T-cell (primary cell): ENCODE measurements at regions of chr11 and their contacts with region 1.

Region 1: GRCh38 chr11:102390667-102391465 is 43.9 kb downstream of the BIRC2 start:
- DNase-seq: peak in 30 of 35 experiments; percentile 17 to 74 (median 32)
- ATAC-seq: peak; percentile 62 to 72 (median 65)
- H3K4me3 ChIP-seq: no peak overlapping the region
- H3K4me3 Mint-ChIP-seq: no peak overlapping the region
- H3K27ac ChIP-seq: no peak overlapping the region
- H3K27ac Mint-ChIP-seq: peak overlapping the region; percentile 73 to 81
- H3K4me1 ChIP-seq: peaks cover 7 to 20% of the 10 kb centered on the region in 2 experiments
- H3K4me1 Mint-ChIP-seq: peaks cover 36 to 50% (median 46%) of the 10 kb centered on the region in 3 donors
- H3K27me3 ChIP-seq: no peaks in the 10 kb centered on the region
- H3K27me3 Mint-ChIP-seq: no peaks in the 10 kb centered on the region

Region 2: DNA sequence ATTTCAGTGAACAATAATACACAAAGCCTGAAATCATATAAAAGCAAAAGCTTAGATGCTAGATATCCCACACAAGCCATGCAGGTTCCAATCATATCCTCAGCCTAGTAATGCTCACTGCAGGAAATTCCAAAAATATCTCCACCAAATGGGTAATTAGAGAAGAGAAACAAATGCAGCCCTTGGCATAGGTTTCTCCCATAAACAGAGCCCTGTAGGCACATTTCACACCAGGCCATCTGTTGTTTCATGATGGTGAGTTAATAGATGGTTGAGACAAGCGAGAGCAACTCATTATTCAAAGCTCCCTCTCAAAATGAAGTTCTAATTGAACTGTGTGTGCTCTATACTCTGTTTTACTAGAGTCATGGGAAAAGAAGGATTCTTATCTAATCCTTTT is 652.4 kb before region 1 on chr11:
- CTCF ChIA-PET with region 1: no interaction called
- POLR2A ChIA-PET with region 1: no interaction called
- DNase-seq: no peak
- ATAC-seq: no peak
- H3K4me3 ChIP-seq: no peak overlapping the region
- H3K4me3 Mint-ChIP-seq: no peak overlapping the region
- H3K27ac ChIP-seq: no peak overlapping the region
- H3K27ac Mint-ChIP-seq: no peak overlapping the region
- H3K4me1 ChIP-seq: no peaks in the 10 kb centered on the region
- H3K4me1 Mint-ChIP-seq: no peaks in the 10 kb centered on the region
- H3K27me3 ChIP-seq: no peaks in the 10 kb centered on the region
- H3K27me3 Mint-ChIP-seq: no peaks in the 10 kb centered on the region

Region 3: DNA sequence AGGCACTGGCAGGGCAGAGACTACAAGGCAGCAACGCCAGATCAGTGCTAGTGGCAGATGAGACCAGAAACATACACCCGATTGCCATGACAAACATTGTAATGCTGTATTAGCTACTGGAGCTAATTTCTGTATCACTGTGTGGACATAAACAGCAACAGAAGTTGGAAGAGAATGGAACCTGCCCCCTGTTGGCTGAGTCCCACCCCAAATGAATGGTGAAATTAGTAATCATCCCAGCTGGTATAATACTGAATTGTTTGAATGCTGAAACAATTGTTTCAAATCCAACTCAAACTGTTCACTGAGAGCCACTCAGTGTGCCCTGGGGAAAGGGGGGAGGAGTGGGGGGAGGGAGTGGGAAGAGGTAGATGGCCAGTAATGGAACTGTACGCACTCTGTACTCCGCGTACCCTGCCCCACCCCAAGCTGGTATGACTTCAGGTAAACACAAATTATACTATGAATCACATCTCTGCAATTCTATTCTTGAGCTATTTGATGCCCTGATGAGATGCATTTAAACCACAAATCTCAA is 84.7 kb before region 1 on chr11:
- CTCF ChIA-PET with region 1: no interaction called
- POLR2A ChIA-PET with region 1: no interaction called
- DNase-seq: peak in 3 of 35 experiments; percentile 22 to 64 (median 49)
- ATAC-seq: peak; percentile 44 to 66 (median 60)
- H3K4me3 ChIP-seq: no peak overlapping the region
- H3K4me3 Mint-ChIP-seq: peak overlapping the region; percentile 37 to 60 (median 49)
- H3K27ac ChIP-seq: peak overlapping the region; percentile 90
- H3K27ac Mint-ChIP-seq: peak overlapping the region; percentile 95 to 97
- H3K4me1 ChIP-seq: peaks cover 30 to 41% of the 10 kb centered on the region in 2 experiments
- H3K4me1 Mint-ChIP-seq: peaks cover 61 to 78% (median 66%) of the 10 kb centered on the region in 3 donors
- H3K27me3 ChIP-seq: no peaks in the 10 kb centered on the region
- H3K27me3 Mint-ChIP-seq: no peaks in the 10 kb centered on the region

Region 4: DNA sequence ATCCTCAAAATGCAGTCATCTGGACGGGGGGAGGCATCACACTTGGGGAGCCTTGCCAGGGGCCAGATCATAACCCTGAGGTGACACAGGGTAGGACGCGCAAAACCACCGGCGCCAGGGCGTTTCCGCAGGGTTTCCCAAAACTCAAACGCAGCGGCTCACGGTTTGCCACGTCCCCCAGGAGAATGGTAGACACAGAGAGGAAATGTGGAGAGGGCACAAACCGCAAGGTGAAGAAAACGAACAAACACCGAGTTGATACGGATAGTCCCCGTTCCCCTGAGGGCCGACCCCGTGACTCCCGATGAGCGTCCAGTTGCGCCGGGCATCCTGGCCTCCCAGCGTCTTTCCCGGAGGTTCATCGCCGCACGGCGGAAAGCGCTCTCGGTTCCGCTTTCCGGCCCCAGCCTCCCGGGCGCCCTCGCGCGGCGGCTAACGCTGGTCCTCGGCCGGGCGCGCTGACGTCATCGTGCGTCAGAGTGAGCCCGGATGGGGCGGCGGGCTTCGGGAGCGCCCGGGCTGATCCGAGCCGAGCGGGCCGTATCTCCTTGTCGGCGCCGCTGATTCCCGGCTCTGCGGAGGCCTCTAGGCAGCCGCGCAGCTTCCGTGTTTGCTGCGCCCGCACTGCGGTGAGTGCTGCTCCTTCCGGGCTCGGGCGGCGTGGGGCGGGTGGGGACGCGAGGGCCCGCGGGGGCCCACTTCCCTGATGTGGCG is 44.0 kb before region 1 on chr11 and contains the start of gene BIRC2:
- CTCF ChIA-PET with region 1: interaction called, 5 to 12 read pairs
- POLR2A ChIA-PET with region 1: no interaction called
- DNase-seq: peak; percentile 88 to 98 (median 94)
- ATAC-seq: peak; percentile 85 to 92 (median 90)
- H3K4me3 ChIP-seq: peak within 1 kb of the TSS; percentile 98 to 99
- H3K4me3 Mint-ChIP-seq: peak within 1 kb of the TSS; percentile 92 to 98 (median 98)
- H3K27ac ChIP-seq: peak within 1 kb of the TSS; percentile 99
- H3K27ac Mint-ChIP-seq: peak within 1 kb of the TSS; percentile 99
- H3K4me1 ChIP-seq: peaks cover 6 to 17% of the 10 kb centered on the region in 2 experiments
- H3K4me1 Mint-ChIP-seq: peaks cover 40 to 50% (median 50%) of the 10 kb centered on the region in 3 donors
- H3K27me3 ChIP-seq: no peaks in the 10 kb centered on the region
- H3K27me3 Mint-ChIP-seq: no peaks in the 10 kb centered on the region
- total RNA-seq, gene BIRC2: 53.3 to 100 (median 60.8) TPM

Region 5: GRCh38 chr11:102413497-102413896 is 22.6 kb after region 1 on chr11:
- CTCF ChIA-PET with region 1: interaction called in 1 of 2 experiments, 10 read pairs
- POLR2A ChIA-PET with region 1: interaction called in 1 of 2 experiments, 3 read pairs
- DNase-seq: peak in 17 of 35 experiments; percentile 7 to 59 (median 31)
- ATAC-seq: peak; percentile 17 to 71 (median 34)
- H3K4me3 ChIP-seq: peak overlapping the region in 1 of 2 donors; percentile 33
- H3K4me3 Mint-ChIP-seq: peak overlapping the region; percentile 74 to 80 (median 76)
- H3K27ac ChIP-seq: peak overlapping the region; percentile 13
- H3K27ac Mint-ChIP-seq: peak overlapping the region; percentile 88 to 94
- H3K4me1 ChIP-seq: peaks cover 40 to 64% of the 10 kb centered on the region in 2 experiments
- H3K4me1 Mint-ChIP-seq: peaks cover 84 to 93% (median 90%) of the 10 kb centered on the region in 3 donors
- H3K27me3 ChIP-seq: no peaks in the 10 kb centered on the region
- H3K27me3 Mint-ChIP-seq: no peaks in the 10 kb centered on the region

Region 6: GRCh38 chr11:102422817-102423712 is 32.2 kb after region 1 on chr11:
- CTCF ChIA-PET with region 1: interaction called, 5 to 11 read pairs
- POLR2A ChIA-PET with region 1: interaction called, 4 to 7 read pairs
- DNase-seq: peak in 1 of 35 experiments; percentile 35
- ATAC-seq: peak; percentile 15 to 66 (median 60)
- H3K4me3 ChIP-seq: no peak overlapping the region
- H3K4me3 Mint-ChIP-seq: peak overlapping the region in 1 of 3 donors; percentile 67
- H3K27ac ChIP-seq: peak overlapping the region; percentile 48
- H3K27ac Mint-ChIP-seq: peak overlapping the region; percentile 86 to 89
- H3K4me1 ChIP-seq: peaks cover 40 to 62% of the 10 kb centered on the region in 2 experiments
- H3K4me1 Mint-ChIP-seq: peaks cover 92 to 95% (median 93%) of the 10 kb centered on the region in 3 donors
- H3K27me3 ChIP-seq: no peaks in the 10 kb centered on the region
- H3K27me3 Mint-ChIP-seq: no peaks in the 10 kb centered on the region

Region 7: GRCh38 chr11:102495161-102496042 is 104.5 kb after region 1 on chr11:
- CTCF ChIA-PET with region 1: interaction called, 13 to 16 read pairs
- POLR2A ChIA-PET with region 1: no interaction called
- DNase-seq: peak in 30 of 35 experiments; percentile 4 to 91 (median 30)
- ATAC-seq: peak; percentile 69 to 86 (median 78)
- H3K4me3 ChIP-seq: no peak overlapping the region
- H3K4me3 Mint-ChIP-seq: no peak overlapping the region
- H3K27ac ChIP-seq: no peak overlapping the region
- H3K27ac Mint-ChIP-seq: no peak overlapping the region
- H3K4me1 ChIP-seq: no peaks in the 10 kb centered on the region
- H3K4me1 Mint-ChIP-seq: peaks cover 7 to 11% (median 8%) of the 10 kb centered on the region in 3 donors
- H3K27me3 ChIP-seq: peaks cover 0 to 9% of the 10 kb centered on the region in 2 experiments
- H3K27me3 Mint-ChIP-seq: peaks cover 5 to 6% of the 10 kb centered on the region in 2 donors